Esophagus muscularis mucosa (tissue), 4 donors: ENCODE measurements at regions of chr13 and their contacts with region 1.

Region 1: GRCh38 chr13:36736119-36736726 is 62.4 kb downstream of the SERTM1 start:
- DNase-seq: no peak
- H3K4me3 ChIP-seq: no peak overlapping the region
- H3K27ac ChIP-seq: no peak overlapping the region
- H3K4me1 ChIP-seq: no peaks in the 10 kb centered on the region
- H3K27me3 ChIP-seq: no peaks in the 10 kb centered on the region
- CTCF ChIP-seq: peak; percentile 42 to 68 (median 66)
- EP300 ChIP-seq: no peak
- POLR2A ChIP-seq: no peak

Region 2: DNA sequence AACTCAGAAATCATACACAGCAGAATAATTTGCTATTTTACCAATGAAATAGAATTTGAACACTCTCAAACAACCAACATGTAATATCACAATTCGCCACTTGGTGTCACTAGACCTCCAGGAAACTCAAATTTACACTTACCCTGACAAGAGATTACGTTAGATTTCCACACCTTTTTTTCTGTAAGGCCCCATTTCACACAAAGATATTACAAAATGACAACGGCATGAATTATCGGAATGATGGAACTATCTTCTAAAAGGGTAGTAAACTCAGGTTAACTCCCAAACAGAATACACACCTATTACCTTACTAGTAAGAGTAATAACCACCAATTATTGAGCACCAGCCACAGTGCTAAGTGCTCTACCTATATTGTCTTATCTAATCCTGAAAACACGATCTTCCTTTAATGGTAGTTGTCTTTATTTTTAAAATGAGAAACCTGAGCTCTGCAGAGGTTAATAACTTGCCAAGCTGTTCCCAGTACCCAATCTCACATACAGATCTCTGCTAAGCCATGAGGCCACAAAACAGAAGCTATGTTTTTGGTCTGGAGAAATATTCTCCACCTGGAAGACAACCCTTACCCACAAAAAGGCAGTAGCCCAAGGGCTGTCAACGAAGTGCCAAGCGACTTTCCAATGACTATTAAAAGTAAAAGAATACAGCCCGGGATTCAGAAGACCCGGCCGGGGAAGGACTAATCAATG is 757.5 kb before region 1 on chr13:
- intact Hi-C with region 1: loop called (anchors 10 kb)
- DNase-seq: no peak
- H3K4me3 ChIP-seq: no peak overlapping the region
- H3K27ac ChIP-seq: peak overlapping the region; percentile 70 to 82 (median 76)
- H3K4me1 ChIP-seq: peaks cover 4 to 20% (median 16%) of the 10 kb centered on the region in 4 donors
- H3K27me3 ChIP-seq: no peaks in the 10 kb centered on the region
- CTCF ChIP-seq: peak; percentile 78 to 84 (median 82)
- EP300 ChIP-seq: no peak
- POLR2A ChIP-seq: no peak

Region 3: GRCh38 chr13:36282818-36283445 is 453.3 kb before region 1 on chr13:
- intact Hi-C with region 1: loop called (anchors 5 kb)
- DNase-seq: no peak
- H3K4me3 ChIP-seq: no peak overlapping the region
- H3K27ac ChIP-seq: no peak overlapping the region
- H3K4me1 ChIP-seq: peaks cover 0 to 9% (median 0%) of the 10 kb centered on the region in 4 donors
- H3K27me3 ChIP-seq: no peaks in the 10 kb centered on the region
- CTCF ChIP-seq: peak; percentile 76 to 86 (median 86)
- EP300 ChIP-seq: no peak
- POLR2A ChIP-seq: no peak

Region 4: GRCh38 chr13:36420437-36420891 is 315.8 kb before region 1 on chr13:
- intact Hi-C with region 1: loop called (anchors 5 kb)
- DNase-seq: peak; percentile 94
- H3K4me3 ChIP-seq: no peak overlapping the region
- H3K27ac ChIP-seq: no peak overlapping the region
- H3K4me1 ChIP-seq: peaks cover 0 to 5% (median 0%) of the 10 kb centered on the region in 4 donors
- H3K27me3 ChIP-seq: peaks cover 0 to 6% (median 0%) of the 10 kb centered on the region in 4 donors
- CTCF ChIP-seq: peak; percentile 65 to 87 (median 81)
- EP300 ChIP-seq: no peak
- POLR2A ChIP-seq: no peak